Aorta (tissue), 5 donors: ENCODE measurements at regions of chr11 and their contacts with region 1.

Region 1: DNA sequence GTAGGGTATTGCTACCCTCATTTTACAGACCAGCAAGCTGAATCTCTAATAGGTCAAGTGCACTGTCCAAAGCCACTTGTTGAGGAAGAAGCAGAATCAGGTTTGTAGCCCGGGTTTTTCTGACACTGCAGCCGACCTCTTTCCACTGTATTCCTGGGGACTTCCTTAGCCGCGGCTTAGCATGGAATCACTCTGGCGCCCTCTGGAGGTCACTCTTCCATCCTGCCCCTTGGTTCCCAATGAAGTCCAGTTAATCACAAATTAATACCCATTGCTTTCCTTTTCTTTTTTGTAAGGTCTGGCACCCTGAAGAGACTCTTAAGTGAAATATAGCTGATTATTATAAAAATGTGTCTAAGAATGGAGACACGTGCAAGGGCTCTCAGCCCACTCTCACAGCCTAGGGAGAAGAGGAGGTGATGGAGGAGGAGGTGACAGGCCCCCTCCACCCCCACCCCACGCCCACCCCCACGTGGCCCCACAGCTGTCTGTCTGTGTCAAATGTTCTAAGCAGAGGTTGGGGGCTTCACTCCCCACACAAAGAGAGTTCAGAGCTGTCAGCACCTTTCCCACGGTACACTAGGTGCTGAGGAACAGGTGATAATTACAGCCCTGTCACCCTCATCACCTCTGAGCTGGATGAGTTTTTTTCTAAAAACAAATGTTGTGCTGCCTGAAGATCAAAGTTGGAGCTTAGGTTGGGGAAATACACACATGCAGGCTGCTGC is 57.7 kb upstream of the DRD2 start:
- DNase-seq: peak; percentile 77 to 91
- ATAC-seq: peak; percentile 81
- H3K4me3 ChIP-seq: no peak overlapping the region
- H3K27ac ChIP-seq: no peak overlapping the region
- H3K4me1 ChIP-seq: no peaks in the 10 kb centered on the region
- H3K27me3 ChIP-seq: no peaks in the 10 kb centered on the region

Region 2: GRCh38 chr11:113305440-113306336 is 227.2 kb before region 1 on chr11:
- intact Hi-C with region 1: loop called (anchors 5 kb)
- DNase-seq: peak; percentile 85 to 93
- ATAC-seq: peak; percentile 89
- H3K4me3 ChIP-seq: no peak overlapping the region
- H3K27ac ChIP-seq: no peak overlapping the region
- H3K4me1 ChIP-seq: no peaks in the 10 kb centered on the region
- H3K27me3 ChIP-seq: no peaks in the 10 kb centered on the region

Region 3: DNA sequence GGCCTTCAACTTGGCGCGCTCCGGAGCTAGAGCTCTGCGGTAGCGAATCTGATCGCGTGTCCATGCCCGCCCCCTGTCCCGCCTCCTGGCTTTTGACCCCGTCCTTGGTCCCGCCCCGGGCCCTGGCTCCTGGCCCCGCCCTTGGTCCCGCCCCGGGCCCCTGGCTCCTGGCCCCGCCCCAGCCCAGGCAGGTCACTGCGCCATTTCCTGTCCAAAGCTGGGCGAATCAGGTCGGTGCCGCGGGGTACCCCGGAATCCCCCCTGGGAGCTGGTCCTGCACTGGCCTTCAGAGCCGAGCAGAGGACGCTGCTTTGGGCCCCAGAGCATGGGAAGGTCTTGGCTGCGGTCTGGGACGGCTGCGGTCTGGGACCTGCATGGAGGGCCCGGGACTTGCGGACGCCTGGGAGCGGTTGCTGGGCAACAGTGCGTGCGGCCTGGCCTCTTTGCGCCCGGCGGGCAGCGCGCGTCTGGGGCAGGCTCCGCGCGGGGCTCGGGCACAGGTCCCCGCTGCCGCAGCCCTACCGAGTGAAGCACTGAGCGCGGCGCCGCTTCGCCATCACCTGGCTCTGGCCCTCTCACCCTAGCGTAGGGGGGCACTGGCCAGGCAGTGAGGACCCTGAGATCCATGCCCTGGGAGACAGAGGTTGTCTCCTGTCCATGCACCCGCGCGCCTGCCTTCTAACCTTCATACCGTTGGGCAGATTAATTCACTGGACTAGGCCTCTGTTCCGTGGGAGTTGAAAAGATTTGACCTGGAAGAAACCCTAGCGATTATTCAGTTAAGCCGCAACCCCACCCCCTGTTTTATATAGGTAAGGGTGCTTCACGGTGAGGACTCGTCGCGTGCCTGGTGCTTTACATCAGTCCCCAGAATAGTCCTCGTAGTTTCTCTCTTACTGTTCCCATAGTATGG is 218.2 kb before region 1 on chr11 and contains the start of gene TTC12:
- intact Hi-C with region 1: loop called (anchors 5 kb)
- DNase-seq: peak; percentile 96 to 98
- ATAC-seq: peak; percentile 99
- H3K4me3 ChIP-seq: peak within 1 kb of the TSS; percentile 49 to 50
- H3K27ac ChIP-seq: peak within 1 kb of the TSS in 1 of 2 donors; percentile 74
- H3K4me1 ChIP-seq: no peaks in the 10 kb centered on the region
- H3K27me3 ChIP-seq: no peaks in the 10 kb centered on the region
- total RNA-seq, gene TTC12: 8.9 to 24.7 TPM

Region 4: DNA sequence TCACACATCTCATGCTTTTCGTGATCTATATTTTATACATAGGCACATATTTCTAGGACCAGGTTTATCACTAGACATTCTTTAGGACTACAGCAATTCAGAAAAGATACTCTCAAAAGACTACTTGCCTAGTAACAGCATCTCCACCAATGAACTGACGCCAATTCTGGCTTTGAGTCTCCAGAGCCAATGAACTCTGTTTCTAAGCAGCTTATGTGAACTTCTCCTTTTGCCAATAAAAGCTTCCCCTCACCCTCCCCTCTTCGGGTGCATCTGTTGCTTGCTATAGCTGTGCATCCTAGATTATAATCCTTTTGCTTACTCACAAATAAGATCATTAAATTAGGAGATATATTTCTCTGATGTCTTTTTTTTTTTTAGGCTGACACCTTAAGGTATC is 156.7 kb before region 1 on chr11:
- intact Hi-C with region 1: loop called in 1 of 2 experiments (anchors 10 kb)
- DNase-seq: no peak
- ATAC-seq: no peak
- H3K4me3 ChIP-seq: no peak overlapping the region
- H3K27ac ChIP-seq: no peak overlapping the region
- H3K4me1 ChIP-seq: no peaks in the 10 kb centered on the region
- H3K27me3 ChIP-seq: no peaks in the 10 kb centered on the region

Region 5: GRCh38 chr11:113488931-113489351 is 43.9 kb before region 1 on chr11:
- intact Hi-C with region 1: no loop called
- DNase-seq: no peak
- ATAC-seq: no peak
- H3K4me3 ChIP-seq: no peak overlapping the region
- H3K27ac ChIP-seq: no peak overlapping the region
- H3K4me1 ChIP-seq: no peaks in the 10 kb centered on the region
- H3K27me3 ChIP-seq: no peaks in the 10 kb centered on the region

Region 6: GRCh38 chr11:113505541-113506375 is 27.1 kb before region 1 on chr11:
- intact Hi-C with region 1: no loop called
- DNase-seq: no peak
- ATAC-seq: no peak
- H3K4me3 ChIP-seq: no peak overlapping the region
- H3K27ac ChIP-seq: no peak overlapping the region
- H3K4me1 ChIP-seq: no peaks in the 10 kb centered on the region
- H3K27me3 ChIP-seq: no peaks in the 10 kb centered on the region

Region 7: GRCh38 chr11:113730887-113731726 is 198.2 kb after region 1 on chr11:
- intact Hi-C with region 1: loop called in 1 of 2 experiments (anchors 5 kb)
- DNase-seq: no peak
- ATAC-seq: no peak
- H3K4me3 ChIP-seq: no peak overlapping the region
- H3K27ac ChIP-seq: no peak overlapping the region
- H3K4me1 ChIP-seq: peaks cover 0 to 2% of the 10 kb centered on the region in 2 donors
- H3K27me3 ChIP-seq: no peaks in the 10 kb centered on the region